ENCODE measurements at regions of chr2 and their contacts with region 1.

Region 1: GRCh38 chr2:170928824-170929685 is at the start of gene GORASP2:
- DNase-seq: peak; percentile 98 to 100
- ATAC-seq: peak; percentile 93 to 97
- H3K4me3 ChIP-seq: peak within 1 kb of the TSS; percentile 85
- H3K27ac ChIP-seq: peak within 1 kb of the TSS; percentile 88 to 96
- H3K4me1 ChIP-seq: peaks cover 15% of the 10 kb centered on the region
- CTCF ChIP-seq: peak; percentile 93
- EP300 ChIP-seq: no peak; a peak in 1 of 5 replicates
- POLR2A ChIP-seq: peak; percentile 77
- RAD21 ChIP-seq: peak; percentile 53 to 58
- polyA plus RNA-seq, gene GORASP2: 137 and 179 TPM in 2 replicates

Region 2: GRCh38 chr2:170332676-170333402 is 596.2 kb before region 1 on chr2:
- CTCF ChIA-PET with region 1: no interaction called
- POLR2A ChIA-PET with region 1: no interaction called
- DNase-seq: no peak
- ATAC-seq: peak in 1 of 2 experiments; percentile 13; a peak in 1 of 6 replicates
- H3K4me3 ChIP-seq: no peak overlapping the region
- H3K27ac ChIP-seq: no peak overlapping the region
- H3K4me1 ChIP-seq: no peaks in the 10 kb centered on the region
- CTCF ChIP-seq: no peak
- EP300 ChIP-seq: no peak
- POLR2A ChIP-seq: no peak
- RAD21 ChIP-seq: no peak

Region 3: GRCh38 chr2:170715062-170715931 is 213.8 kb before region 1 on chr2 and contains the start of gene SP5:
- CTCF ChIA-PET with region 1: no interaction called
- POLR2A ChIA-PET with region 1: no interaction called
- DNase-seq: peak; percentile 35 to 57
- ATAC-seq: peak; percentile 65 to 82
- H3K4me3 ChIP-seq: peak within 1 kb of the TSS; percentile 51
- H3K27ac ChIP-seq: peak within 1 kb of the TSS in 1 of 2 experiments; percentile 59; a peak in 4 of 6 replicates
- H3K4me1 ChIP-seq: peaks cover 11% of the 10 kb centered on the region; the same call in 2 of the 3 replicates
- CTCF ChIP-seq: no peak
- EP300 ChIP-seq: no peak
- POLR2A ChIP-seq: no peak
- RAD21 ChIP-seq: no peak
- polyA plus RNA-seq, gene SP5: not detected in 2 replicates

Region 4: GRCh38 chr2:170806548-170806947 is 122.5 kb before region 1 on chr2:
- CTCF ChIA-PET with region 1: no interaction called
- POLR2A ChIA-PET with region 1: no interaction called
- DNase-seq: no peak
- ATAC-seq: no peak
- H3K4me3 ChIP-seq: no peak overlapping the region
- H3K27ac ChIP-seq: no peak overlapping the region
- H3K4me1 ChIP-seq: no peaks in the 10 kb centered on the region
- CTCF ChIP-seq: no peak
- EP300 ChIP-seq: no peak
- POLR2A ChIP-seq: no peak
- RAD21 ChIP-seq: no peak

Region 5: DNA sequence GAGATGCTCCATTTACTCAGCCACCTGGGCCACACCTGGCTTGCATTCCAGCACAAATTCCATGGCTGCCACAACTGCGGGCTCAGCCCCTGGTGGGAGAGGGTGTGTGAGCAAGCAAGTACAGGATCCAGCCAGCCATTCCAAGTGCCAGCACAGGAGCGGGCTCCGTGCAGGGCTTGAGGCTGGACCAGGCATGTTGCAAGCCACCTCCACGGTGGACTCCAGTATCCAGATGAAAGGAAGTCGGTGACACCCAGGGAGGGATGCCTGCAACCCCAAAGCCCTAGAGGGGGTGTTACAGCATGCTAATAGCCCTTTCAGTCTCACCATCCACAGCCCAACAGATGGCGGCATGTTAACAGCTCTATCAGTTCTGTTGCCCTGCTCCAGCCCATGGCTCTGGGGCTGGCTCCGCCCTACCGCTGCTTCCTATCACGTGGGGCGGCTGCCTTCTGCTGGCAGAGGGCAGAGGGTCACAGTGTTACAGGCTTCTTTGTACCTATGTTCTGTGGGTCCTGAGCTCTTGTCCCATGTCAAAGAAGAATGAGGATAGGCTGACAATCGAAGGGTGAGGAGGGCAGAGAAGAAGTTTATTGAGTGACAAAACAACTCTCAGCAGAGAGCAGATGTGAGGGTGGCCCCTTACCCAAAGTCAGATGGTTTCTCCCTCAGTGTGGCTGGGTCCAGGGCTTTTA is 11.7 kb before region 1 on chr2:
- CTCF ChIA-PET with region 1: interaction called, 19 read pairs
- POLR2A ChIA-PET with region 1: no interaction called
- DNase-seq: no peak
- ATAC-seq: no peak
- H3K4me3 ChIP-seq: no peak overlapping the region
- H3K27ac ChIP-seq: no peak overlapping the region
- H3K4me1 ChIP-seq: no peaks in the 10 kb centered on the region
- CTCF ChIP-seq: no peak
- EP300 ChIP-seq: no peak
- POLR2A ChIP-seq: no peak
- RAD21 ChIP-seq: no peak

Region 6: DNA sequence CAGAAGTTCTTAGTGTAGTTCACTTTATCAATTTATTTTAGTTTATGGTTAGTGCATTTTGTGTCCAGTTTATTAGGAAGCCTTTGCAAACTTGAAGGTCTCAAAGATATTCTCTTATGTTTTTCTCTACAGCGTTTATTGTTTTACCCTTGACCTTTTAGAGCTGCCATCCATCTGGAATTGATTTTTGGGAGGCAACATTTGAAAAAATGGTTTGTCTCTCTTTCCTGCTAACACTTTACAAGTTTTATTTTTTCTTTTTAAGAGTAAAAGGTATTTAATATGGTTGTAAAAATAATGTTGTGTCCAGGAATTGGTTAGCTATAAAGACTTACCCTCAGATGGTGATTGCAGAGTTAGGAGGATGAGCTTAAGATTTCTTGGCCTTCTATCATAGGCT is 14.0 kb after region 1 on chr2:
- CTCF ChIA-PET with region 1: interaction called, 29 read pairs
- POLR2A ChIA-PET with region 1: interaction called, 5 read pairs
- DNase-seq: no peak
- ATAC-seq: no peak
- H3K4me3 ChIP-seq: no peak overlapping the region
- H3K27ac ChIP-seq: no peak overlapping the region
- H3K4me1 ChIP-seq: no peaks in the 10 kb centered on the region
- CTCF ChIP-seq: no peak
- EP300 ChIP-seq: no peak
- POLR2A ChIP-seq: no peak
- RAD21 ChIP-seq: no peak

Region 7: DNA sequence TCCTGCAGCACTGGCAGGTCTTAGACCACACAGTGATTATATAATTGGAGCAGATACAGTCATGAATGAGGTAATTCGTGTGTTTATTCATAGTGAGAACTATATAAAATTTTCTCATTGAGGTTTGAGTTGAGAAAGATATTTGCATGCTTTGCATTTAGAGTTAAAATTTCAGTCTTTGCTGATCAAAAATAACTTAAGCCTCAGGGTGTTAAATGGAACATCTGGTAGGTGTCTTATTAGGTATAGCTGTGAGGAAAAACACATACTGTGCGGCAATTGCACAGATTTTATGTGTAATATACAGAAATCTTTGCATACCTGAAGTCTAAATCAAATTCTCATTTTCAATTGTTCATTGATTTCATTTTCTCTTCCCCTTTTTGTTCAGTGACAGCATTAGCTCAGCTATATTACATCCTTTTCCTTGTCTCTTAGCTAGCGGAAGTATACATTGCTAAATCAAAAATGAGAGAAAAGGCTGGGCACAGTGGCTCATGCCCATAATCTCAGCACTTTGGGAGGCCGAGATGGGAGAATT is 21.2 kb after region 1 on chr2:
- CTCF ChIA-PET with region 1: interaction called, 29 read pairs
- POLR2A ChIA-PET with region 1: no interaction called
- DNase-seq: no peak
- ATAC-seq: no peak
- H3K4me3 ChIP-seq: no peak overlapping the region
- H3K27ac ChIP-seq: no peak overlapping the region
- H3K4me1 ChIP-seq: no peaks in the 10 kb centered on the region
- CTCF ChIP-seq: no peak
- EP300 ChIP-seq: no peak
- POLR2A ChIP-seq: no peak
- RAD21 ChIP-seq: no peak

Measured in A549 (cell line).